Adrenal gland (tissue), 19 donors: ENCODE measurements at regions of chr19 and their contacts with region 1.

Region 1: GRCh38 chr19:20171285-20171684 is 4.3 kb downstream of the ZNF486 start:
- DNase-seq: no peak
- H3K4me3 ChIP-seq: no peak overlapping the region
- H3K27ac ChIP-seq: no peak overlapping the region
- H3K4me1 ChIP-seq: peaks cover 0 to 7% of the 10 kb centered on the region in 2 donors
- H3K27me3 ChIP-seq: no peaks in the 10 kb centered on the region
- CTCF ChIP-seq: no peak
- POLR2A ChIP-seq: no peak

Region 2: DNA sequence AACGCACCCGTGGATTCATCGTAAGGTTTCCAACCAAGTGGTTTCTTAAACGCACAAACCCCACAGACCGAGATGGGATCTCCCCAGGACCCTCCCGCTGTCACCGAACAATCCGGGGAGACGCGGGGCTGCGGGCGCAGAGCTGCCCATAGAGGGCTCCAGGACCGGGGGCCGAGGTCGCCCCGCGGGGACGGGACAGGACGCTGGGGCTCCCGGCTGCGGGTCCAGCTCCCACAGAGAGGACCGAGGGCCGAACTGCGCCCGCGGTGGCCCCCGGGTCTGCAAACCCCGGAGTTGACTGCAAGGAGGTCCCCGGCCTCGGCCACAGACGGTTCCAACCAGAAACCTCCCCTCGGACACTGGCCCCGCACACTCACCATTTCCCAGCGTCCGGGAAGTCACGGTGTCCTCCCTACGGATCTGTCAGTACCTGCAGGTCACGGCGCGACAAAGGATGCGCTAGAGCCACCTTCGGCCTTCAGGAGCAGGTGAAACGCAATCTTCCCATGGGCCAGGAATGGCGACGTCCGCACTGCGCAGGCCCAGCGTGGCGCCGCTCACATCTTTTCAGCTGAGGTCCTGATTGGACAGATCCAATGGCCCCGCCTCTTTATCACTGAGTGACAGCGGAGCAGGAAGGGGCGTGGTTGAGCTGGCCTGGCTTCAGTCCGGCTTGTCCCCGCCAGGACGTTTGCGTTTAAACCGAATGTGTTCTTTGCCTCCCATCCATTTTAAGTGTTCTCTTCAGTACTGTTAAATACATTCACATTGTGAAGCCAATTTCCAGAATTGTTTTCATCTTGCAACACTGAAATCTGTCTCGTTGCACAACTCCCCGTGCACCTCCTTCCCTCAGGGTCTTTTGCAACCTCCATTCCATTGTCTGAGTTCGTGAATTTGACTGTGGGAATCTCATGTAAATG is 438.4 kb before region 1 on chr19 and contains the start of gene ZNF14:
- intact Hi-C with region 1: loop called in 1 of 2 experiments (anchors 5 kb)
- DNase-seq: peak; percentile 93 to 98 (median 95)
- H3K4me3 ChIP-seq: peak within 1 kb of the TSS; percentile 51 to 89 (median 65)
- H3K27ac ChIP-seq: peak within 1 kb of the TSS in 3 of 5 donors; percentile 40 to 85 (median 67)
- H3K4me1 ChIP-seq: peaks cover 0 to 9% of the 10 kb centered on the region in 2 donors
- H3K27me3 ChIP-seq: no peaks in the 10 kb centered on the region
- CTCF ChIP-seq: peak in 1 of 6 experiments; percentile 4
- POLR2A ChIP-seq: peak; percentile 71 to 77
- total RNA-seq, gene ZNF14: 3.1 to 8.5 (median 4.2) TPM

Region 3: GRCh38 chr19:20414127-20414526 is 242.8 kb after region 1 on chr19:
- intact Hi-C with region 1: no loop called
- DNase-seq: no peak
- H3K4me3 ChIP-seq: no peak overlapping the region
- H3K27ac ChIP-seq: no peak overlapping the region
- H3K4me1 ChIP-seq: no peaks in the 10 kb centered on the region
- H3K27me3 ChIP-seq: no peaks in the 10 kb centered on the region
- CTCF ChIP-seq: no peak
- POLR2A ChIP-seq: no peak